Activated CD4-positive, alpha-beta T cell treated with anti-CD3 and anti-CD28 coated beads, Interleukin-2, amount 10 ng/mL, durations not matched to agents 7 days and 5 days (primary cell): ENCODE measurements at regions of chr3 and their contacts with region 1.

Region 1: GRCh38 chr3:15268033-15268631 is 62.1 kb downstream of the CAPN7 start:
- DNase-seq: peak; percentile 89
- H3K4me3 Mint-ChIP-seq: no peak overlapping the region
- H3K27ac Mint-ChIP-seq: no peak overlapping the region
- H3K4me1 Mint-ChIP-seq: peaks cover 60% of the 10 kb centered on the region
- H3K27me3 Mint-ChIP-seq: no peaks in the 10 kb centered on the region

Region 2: DNA sequence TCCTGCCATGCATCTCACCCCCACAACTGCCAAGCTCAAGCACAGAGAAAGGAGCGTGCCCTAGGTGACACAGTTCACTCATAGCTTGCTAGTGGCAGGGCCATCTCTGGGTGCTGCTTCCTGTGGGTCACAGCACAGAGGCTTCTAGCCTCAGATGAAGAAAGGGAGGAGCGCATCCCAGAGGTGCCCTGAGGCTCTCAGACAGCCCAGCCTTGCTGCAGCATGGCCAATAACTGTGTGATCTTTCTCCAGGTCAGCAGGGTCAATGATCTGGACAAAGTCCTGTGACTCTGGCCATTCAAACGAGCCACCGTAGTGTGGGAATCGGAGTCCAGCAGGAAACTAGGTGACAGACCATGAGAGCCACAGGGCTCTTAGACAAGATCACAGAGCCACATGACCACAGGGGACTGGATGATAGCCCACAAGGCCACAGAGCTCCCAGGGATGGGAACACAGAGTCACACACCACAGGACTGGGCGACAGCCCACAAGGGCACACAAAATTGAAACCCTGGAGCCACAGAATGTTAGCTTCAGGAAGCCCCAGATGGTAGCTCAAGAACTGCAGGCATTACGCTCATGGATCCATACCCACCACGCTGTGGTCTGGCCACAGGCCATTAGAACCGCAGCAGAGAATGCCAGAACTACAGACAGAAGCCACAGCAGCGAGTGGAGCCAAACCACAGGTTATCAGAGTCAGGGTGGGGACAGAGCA is 702.1 kb before region 1 on chr3:
- CTCF ChIA-PET with region 1: no interaction called
- POLR2A ChIA-PET with region 1: no interaction called
- DNase-seq: no peak
- H3K4me3 Mint-ChIP-seq: no peak overlapping the region
- H3K27ac Mint-ChIP-seq: no peak overlapping the region
- H3K4me1 Mint-ChIP-seq: peaks cover 14% of the 10 kb centered on the region
- H3K27me3 Mint-ChIP-seq: peaks cover 3% of the 10 kb centered on the region

Region 3: DNA sequence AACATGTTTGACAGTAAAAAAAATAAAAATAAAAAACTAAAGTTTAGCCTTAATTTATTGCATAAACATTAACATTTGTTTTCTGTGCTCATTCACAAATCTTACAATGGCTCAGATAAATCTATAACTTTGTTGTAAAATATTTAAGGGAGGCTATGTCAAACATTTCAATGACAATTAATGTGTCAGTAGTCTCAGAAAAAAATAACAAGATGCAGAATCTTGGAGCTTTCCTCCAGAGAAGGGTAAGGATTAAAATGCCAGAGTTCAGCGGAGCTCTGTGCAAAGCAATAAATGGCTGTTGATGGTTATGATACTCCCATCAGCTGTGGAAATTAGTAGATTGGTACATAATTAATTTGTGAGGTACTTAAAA is 82.0 kb before region 1 on chr3:
- CTCF ChIA-PET with region 1: no interaction called
- POLR2A ChIA-PET with region 1: no interaction called
- DNase-seq: no peak
- H3K4me3 Mint-ChIP-seq: no peak overlapping the region
- H3K27ac Mint-ChIP-seq: no peak overlapping the region
- H3K4me1 Mint-ChIP-seq: no peaks in the 10 kb centered on the region
- H3K27me3 Mint-ChIP-seq: peaks cover 5% of the 10 kb centered on the region

Region 4: GRCh38 chr3:15205934-15206661 is 62.0 kb before region 1 on chr3 and contains the start of gene CAPN7:
- CTCF ChIA-PET with region 1: interaction called, 13 read pairs
- POLR2A ChIA-PET with region 1: no interaction called
- DNase-seq: peak; percentile 90
- H3K4me3 Mint-ChIP-seq: peak within 1 kb of the TSS; percentile 83
- H3K27ac Mint-ChIP-seq: peak within 1 kb of the TSS; percentile 93
- H3K4me1 Mint-ChIP-seq: peaks cover 34% of the 10 kb centered on the region
- H3K27me3 Mint-ChIP-seq: peaks cover 1% of the 10 kb centered on the region
- total RNA-seq, gene CAPN7: 25.0 to 27.0 TPM

Region 5: DNA sequence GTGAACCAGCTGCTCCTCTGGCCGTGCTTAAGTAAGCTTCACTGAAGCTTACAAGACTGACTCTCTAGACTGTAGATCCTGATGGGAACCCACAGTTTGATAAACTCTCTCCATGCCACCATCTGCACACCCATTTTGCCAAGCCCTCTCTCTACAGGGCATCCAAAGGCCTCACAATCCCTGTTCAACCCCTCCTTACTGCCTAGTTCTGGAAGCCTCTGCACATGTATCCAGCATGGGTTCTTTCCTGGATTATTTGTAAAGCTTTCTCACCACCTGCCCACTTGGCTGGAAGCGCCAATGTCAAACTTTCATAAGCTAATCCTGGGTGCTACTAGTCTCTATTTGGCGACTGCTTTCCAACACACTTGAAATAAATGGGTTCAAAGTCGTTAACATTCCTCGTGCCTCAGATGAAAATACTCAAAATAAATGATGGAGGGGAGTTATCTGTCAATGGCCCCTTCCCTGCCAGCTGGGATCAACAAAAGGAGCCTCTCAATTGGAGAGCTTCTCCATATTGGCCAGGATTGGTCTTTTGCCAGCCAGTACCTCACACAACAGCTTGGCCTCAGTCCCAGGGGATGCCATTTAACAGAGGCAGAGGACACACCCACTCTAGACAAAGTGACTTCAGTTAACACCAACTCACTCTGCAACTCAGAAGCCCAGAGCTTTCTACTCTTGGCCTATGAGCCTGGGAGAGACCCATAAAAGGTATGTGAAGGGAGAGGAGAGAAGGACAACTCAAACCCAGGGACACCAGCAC is 16.2 kb after region 1 on chr3:
- CTCF ChIA-PET with region 1: interaction called, 48 read pairs
- POLR2A ChIA-PET with region 1: no interaction called
- DNase-seq: no peak
- H3K4me3 Mint-ChIP-seq: no peak overlapping the region
- H3K27ac Mint-ChIP-seq: peak overlapping the region; percentile 51
- H3K4me1 Mint-ChIP-seq: peaks cover 44% of the 10 kb centered on the region
- H3K27me3 Mint-ChIP-seq: no peaks in the 10 kb centered on the region

Region 6: GRCh38 chr3:15356186-15356585 is 88.1 kb after region 1 on chr3:
- CTCF ChIA-PET with region 1: interaction called, 13 read pairs
- POLR2A ChIA-PET with region 1: no interaction called
- DNase-seq: no peak
- H3K4me3 Mint-ChIP-seq: no peak overlapping the region
- H3K27ac Mint-ChIP-seq: peak overlapping the region; percentile 85
- H3K4me1 Mint-ChIP-seq: peaks cover 52% of the 10 kb centered on the region
- H3K27me3 Mint-ChIP-seq: no peaks in the 10 kb centered on the region

Region 7: DNA sequence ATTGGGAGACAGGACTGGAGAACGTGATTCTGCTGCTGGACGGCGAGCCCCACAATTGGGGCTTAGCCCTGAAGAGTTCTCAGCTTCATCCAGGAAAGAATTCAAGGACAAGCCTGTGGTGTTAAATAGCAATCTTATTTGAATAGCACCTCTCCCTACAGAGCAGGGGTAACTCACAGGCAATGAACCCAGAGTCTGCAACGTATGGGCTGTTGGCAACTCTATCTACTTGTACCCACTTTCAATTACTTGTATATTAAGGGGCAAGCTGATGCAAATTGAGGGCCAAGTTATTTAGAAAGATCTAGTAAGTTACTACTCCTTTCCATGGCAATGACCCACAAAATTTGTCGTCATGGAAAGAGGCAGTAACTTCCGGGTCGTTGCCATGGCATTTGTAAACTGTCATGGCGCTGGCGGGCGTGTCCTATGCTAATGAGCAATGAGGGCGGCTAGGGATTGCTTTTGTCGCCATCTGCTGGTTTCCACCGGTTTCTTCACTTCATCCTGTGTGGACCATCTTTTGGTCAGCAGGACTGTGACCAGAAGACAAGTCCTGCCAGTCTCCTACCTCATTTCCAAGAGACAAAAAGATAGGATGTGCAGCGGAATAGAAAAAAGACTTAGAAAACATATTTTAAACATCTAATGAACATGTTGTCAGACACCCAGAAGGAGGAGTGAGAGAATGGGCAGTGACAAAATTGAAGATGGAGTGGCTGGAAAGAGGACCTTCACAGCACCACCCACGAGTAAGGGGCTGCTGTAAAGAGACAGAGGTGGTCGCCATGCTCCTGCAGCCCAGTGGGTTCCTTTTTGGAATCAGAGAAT is 110.0 kb after region 1 on chr3:
- CTCF ChIA-PET with region 1: interaction called, 24 read pairs
- POLR2A ChIA-PET with region 1: no interaction called
- DNase-seq: peak; percentile 98
- H3K4me3 Mint-ChIP-seq: no peak overlapping the region
- H3K27ac Mint-ChIP-seq: peak overlapping the region; percentile 86
- H3K4me1 Mint-ChIP-seq: peaks cover 8% of the 10 kb centered on the region
- H3K27me3 Mint-ChIP-seq: no peaks in the 10 kb centered on the region

Region 8: GRCh38 chr3:15399970-15400369 is 131.8 kb after region 1 on chr3:
- CTCF ChIA-PET with region 1: interaction called, 29 read pairs
- POLR2A ChIA-PET with region 1: no interaction called
- DNase-seq: peak; percentile 31
- H3K4me3 Mint-ChIP-seq: no peak overlapping the region
- H3K27ac Mint-ChIP-seq: peak overlapping the region; percentile 5
- H3K4me1 Mint-ChIP-seq: peaks cover 35% of the 10 kb centered on the region
- H3K27me3 Mint-ChIP-seq: peaks cover 3% of the 10 kb centered on the region